Activated T-helper 2 cell treated with anti-CD3 and anti-CD28 coated beads, Interferon-gamma antibody, Interleukin-2, Interleukin-4, amounts not matched to agents 10 μg/mL and 5 μg/mL and 100 μg/mL, durations not matched to agents 14 hours and 24 hours and 36 hours (primary cell): ENCODE measurements at regions of chr6 and their contacts with region 1.

Region 1: DNA sequence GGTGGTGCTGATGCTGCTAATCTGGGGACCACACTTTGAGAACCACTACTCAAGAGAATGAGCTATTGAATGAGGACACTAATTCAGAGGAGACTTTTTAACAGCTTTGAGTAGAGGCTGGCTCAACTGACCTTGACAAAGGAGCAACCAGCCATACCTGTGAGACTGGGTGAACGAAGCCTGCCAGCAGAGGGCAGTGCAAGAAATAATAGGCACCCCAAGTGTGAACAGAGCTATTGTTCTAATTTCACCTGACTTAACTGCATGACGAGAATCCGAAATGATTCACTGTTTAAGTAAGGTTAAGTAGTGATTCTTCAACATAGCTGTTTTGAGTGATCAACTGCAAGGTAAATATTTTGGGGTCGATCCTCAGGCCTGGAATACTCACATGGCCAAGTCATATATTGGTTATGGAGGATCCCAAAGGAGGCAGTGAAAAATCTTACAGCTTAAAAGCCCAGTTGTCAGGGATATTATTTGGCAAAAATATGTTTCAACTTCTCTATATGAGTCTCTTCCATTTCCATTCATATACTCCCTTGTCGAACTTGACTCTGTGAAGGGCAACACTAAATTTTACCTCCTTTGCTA is 550.5 kb upstream of the MARCKS start:
- DNase-seq: peak; percentile 13
- H3K4me3 Mint-ChIP-seq: no peak overlapping the region
- H3K27ac Mint-ChIP-seq: no peak overlapping the region
- H3K4me1 Mint-ChIP-seq: no peaks in the 10 kb centered on the region
- H3K27me3 Mint-ChIP-seq: no peaks in the 10 kb centered on the region

Region 2: GRCh38 chr6:113281014-113281413 is 25.6 kb before region 1 on chr6:
- intact Hi-C with region 1: no loop called
- DNase-seq: no peak
- H3K4me3 Mint-ChIP-seq: no peak overlapping the region
- H3K27ac Mint-ChIP-seq: no peak overlapping the region
- H3K4me1 Mint-ChIP-seq: no peaks in the 10 kb centered on the region
- H3K27me3 Mint-ChIP-seq: no peaks in the 10 kb centered on the region

Region 3: DNA sequence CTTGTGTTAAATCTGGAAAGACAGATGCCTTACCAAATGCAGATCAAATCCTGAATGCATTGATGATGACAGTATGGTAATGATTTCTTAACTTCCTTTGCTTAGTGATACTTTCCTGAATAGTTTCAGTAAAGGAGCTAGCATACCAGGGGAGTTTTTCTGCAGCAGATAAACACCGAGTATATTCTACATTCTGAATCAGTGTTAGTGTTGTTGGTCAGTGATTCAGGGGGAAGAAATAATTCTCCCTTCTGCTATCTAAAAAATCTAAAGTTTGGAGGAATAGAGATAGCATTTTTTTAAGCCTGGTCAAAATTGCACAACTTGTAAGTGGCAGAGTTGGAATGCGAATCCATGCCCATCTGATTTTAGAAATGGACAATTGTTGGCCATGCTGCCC is 38.3 kb after region 1 on chr6:
- intact Hi-C with region 1: no loop called
- DNase-seq: no peak
- H3K4me3 Mint-ChIP-seq: no peak overlapping the region
- H3K27ac Mint-ChIP-seq: no peak overlapping the region
- H3K4me1 Mint-ChIP-seq: no peaks in the 10 kb centered on the region
- H3K27me3 Mint-ChIP-seq: no peaks in the 10 kb centered on the region

Region 4: DNA sequence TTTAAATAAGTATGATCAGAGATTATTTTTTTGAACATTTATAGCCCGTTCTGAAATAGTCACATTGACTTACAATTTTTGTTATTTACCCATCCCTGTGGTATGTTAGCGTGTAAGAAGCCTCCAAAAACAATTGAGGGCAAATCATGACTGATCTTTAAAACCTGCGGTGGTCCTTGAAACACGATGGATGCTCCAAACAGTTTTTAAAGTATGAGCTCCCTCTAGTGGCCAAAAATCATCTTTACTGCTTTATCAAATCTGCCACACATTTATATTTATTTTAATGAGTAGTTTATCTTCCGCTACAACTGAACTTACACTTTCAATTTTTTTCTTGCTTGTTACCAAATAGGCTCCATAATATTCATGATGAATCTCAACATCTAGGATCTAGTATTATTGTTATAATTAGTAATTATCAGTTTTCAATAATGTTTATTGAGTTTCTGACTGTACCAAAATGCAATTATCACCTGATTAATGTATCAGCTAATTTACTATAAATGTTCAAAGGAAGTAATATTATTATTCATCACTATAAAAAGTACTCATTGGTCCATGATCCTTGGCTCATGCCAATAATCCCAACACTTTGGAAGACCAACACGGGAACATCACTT is 602.7 kb after region 1 on chr6:
- intact Hi-C with region 1: loop called (anchors 1 kb)
- DNase-seq: no peak
- H3K4me3 Mint-ChIP-seq: no peak overlapping the region
- H3K27ac Mint-ChIP-seq: no peak overlapping the region
- H3K4me1 Mint-ChIP-seq: no peaks in the 10 kb centered on the region
- H3K27me3 Mint-ChIP-seq: peaks cover 10% of the 10 kb centered on the region